A549 (cell line): ENCODE measurements at regions of chr10 and their contacts with region 1.

Region 1: GRCh38 chr10:29998142-29998808 is 61.1 kb downstream of the JCAD start:
- DNase-seq: peak; percentile 85 to 86
- ATAC-seq: peak; percentile 72 to 90; a peak in 5 of 6 replicates
- H3K4me3 ChIP-seq: no peak overlapping the region
- H3K27ac ChIP-seq: no peak overlapping the region
- H3K4me1 ChIP-seq: peaks cover 5% of the 10 kb centered on the region; the same call in 2 of the 3 replicates
- CTCF ChIP-seq: peak; percentile 98
- EP300 ChIP-seq: no peak
- POLR2A ChIP-seq: no peak
- RAD21 ChIP-seq: peak; percentile 96 to 99

Region 2: DNA sequence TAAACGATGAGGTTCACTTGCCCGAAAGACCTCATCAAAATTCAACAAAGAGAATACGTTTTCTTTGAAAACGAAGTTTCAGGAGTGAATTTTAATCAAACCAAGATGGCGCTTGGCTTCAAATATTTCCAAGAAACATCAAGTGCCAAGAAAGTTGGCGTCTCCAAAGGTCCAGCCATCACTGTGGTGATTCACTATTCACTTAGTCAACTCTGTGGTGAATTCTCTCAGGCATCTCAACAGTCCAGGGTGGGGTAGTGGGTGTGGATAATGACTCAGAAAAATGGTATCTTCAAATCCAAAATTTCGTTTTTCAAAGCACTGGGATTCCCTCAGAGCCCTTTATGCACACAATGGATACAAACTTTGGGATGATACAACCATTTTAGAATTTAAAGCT is 496.6 kb before region 1 on chr10:
- CTCF ChIA-PET with region 1: no interaction called
- POLR2A ChIA-PET with region 1: no interaction called
- DNase-seq: peak; percentile 55 to 78
- ATAC-seq: peak; percentile 90
- H3K4me3 ChIP-seq: no peak overlapping the region
- H3K27ac ChIP-seq: no peak overlapping the region
- H3K4me1 ChIP-seq: peaks cover 11% of the 10 kb centered on the region; the same call in 2 of the 3 replicates
- CTCF ChIP-seq: no peak
- EP300 ChIP-seq: no peak
- POLR2A ChIP-seq: no peak
- RAD21 ChIP-seq: no peak

Region 3: GRCh38 chr10:29980084-29980483 is 18.2 kb before region 1 on chr10:
- CTCF ChIA-PET with region 1: interaction called, 110 read pairs
- POLR2A ChIA-PET with region 1: no interaction called
- DNase-seq: no peak
- ATAC-seq: no peak
- H3K4me3 ChIP-seq: no peak overlapping the region
- H3K27ac ChIP-seq: no peak overlapping the region
- H3K4me1 ChIP-seq: no peaks in the 10 kb centered on the region
- CTCF ChIP-seq: no peak
- EP300 ChIP-seq: no peak
- POLR2A ChIP-seq: no peak
- RAD21 ChIP-seq: no peak

Region 4: DNA sequence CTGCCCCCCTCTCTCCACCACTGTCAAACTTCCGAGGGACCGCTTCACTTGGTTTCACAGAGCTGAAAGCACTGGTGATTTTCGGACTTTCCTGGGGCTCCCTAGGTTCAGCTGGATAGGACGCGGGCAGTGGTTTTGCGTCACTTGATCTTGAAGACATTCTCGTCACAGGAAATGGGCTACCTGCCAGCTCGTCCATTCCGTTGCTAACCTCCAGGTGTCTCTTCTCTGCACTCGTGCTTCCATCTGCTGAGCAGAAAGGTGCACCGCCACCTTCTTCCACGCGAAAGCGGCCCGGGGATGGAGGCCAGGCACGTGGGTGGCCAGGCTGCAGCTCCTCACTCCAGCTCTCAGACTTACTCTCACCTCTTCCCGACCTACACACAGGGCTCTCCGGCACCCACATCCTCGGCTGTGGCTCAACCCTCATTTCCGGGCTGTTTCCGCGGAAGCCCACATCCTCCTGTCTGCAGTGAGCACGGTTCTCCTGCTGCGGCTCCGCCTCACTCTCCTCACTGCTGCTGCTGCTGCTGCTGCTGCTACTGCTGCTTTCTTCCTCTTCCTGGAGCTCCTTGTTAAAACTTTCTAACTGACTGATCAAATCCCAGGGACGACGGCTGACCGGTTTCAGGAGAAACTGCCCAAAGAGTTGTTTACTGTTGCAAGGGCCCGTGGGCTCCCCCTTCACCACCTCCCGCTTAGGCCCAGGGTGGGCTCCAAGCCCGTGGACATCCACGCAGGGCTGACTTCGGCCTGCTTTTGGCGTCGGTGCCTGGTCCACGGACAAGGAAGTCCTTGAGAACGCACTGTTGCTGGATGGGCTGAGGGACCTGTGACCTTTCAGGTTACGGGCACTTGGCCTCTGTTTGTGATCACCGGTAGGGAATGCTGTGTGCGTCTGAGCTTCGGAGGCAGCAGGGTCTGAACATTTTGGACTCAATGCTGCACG is 29.1 kb after region 1 on chr10:
- CTCF ChIA-PET with region 1: interaction called, 10 read pairs
- POLR2A ChIA-PET with region 1: no interaction called
- DNase-seq: peak in 1 of 2 experiments; percentile 32
- ATAC-seq: peak in 1 of 2 experiments; percentile 30; a peak in 1 of 6 replicates
- H3K4me3 ChIP-seq: no peak overlapping the region
- H3K27ac ChIP-seq: no peak overlapping the region
- H3K4me1 ChIP-seq: no peaks in the 10 kb centered on the region
- CTCF ChIP-seq: no peak
- EP300 ChIP-seq: no peak
- POLR2A ChIP-seq: no peak
- RAD21 ChIP-seq: no peak

Region 5: GRCh38 chr10:30233186-30233959 is 235.1 kb after region 1 on chr10:
- CTCF ChIA-PET with region 1: interaction called, 10 read pairs
- POLR2A ChIA-PET with region 1: no interaction called
- DNase-seq: no peak
- ATAC-seq: no peak
- H3K4me3 ChIP-seq: no peak overlapping the region
- H3K27ac ChIP-seq: no peak overlapping the region
- H3K4me1 ChIP-seq: no peaks in the 10 kb centered on the region
- CTCF ChIP-seq: no peak
- EP300 ChIP-seq: no peak
- POLR2A ChIP-seq: no peak
- RAD21 ChIP-seq: no peak